ENCODE measurements at regions of chr6 and their contacts with region 1.

Region 1: GRCh38 chr6:137497721-137498463 is 3.7 kb upstream of the OLIG3 start:
- DNase-seq: peak; percentile 33
- ATAC-seq: peak; percentile 11
- H3K4me3 Mint-ChIP-seq: peak overlapping the region; percentile 38
- H3K27ac Mint-ChIP-seq: no peak overlapping the region
- H3K4me1 Mint-ChIP-seq: peaks cover 42% of the 10 kb centered on the region
- H3K27me3 Mint-ChIP-seq: peaks cover 69% of the 10 kb centered on the region

Region 2: DNA sequence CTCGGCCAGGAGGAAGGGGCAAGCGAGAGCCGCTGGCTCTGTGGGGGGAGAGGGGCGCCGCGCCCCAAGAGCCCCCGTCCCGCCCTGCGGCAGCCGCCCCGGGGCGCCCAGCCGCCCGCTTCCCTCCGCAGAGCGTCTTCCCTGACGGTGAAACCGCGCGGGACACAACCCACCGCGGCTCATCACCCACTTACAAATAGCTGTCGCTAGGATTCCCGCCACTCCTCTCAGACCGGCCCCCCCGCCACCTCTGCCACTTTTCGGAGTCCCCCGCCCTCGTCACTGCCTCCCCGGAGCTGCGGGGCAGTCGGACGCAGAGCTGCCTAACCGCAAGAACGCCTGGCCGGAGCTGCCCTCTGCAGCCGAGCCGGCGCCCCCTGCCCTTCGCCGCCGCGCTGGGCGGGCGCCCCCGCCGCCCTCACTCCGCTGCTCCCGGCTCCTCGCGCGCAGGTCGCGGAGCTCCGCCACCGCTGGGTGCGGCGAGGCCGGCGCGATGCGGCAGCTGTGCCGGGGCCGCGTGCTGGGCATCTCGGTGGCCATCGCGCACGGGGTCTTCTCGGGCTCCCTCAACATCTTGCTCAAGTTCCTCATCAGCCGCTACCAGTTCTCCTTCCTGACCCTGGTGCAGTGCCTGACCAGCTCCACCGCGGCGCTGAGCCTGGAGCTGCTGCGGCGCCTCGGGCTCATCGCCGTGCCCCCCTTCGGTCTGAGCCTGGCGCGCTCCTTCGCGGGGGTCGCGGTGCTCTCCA is 575.8 kb before region 1 on chr6 and contains the start of gene SLC35D3:
- CTCF ChIA-PET with region 1: no interaction called
- POLR2A ChIA-PET with region 1: no interaction called
- intact Hi-C with region 1: loop called in 1 of 2 experiments (anchors 5 kb)
- DNase-seq: peak; percentile 41
- ATAC-seq: peak; percentile 35
- H3K4me3 Mint-ChIP-seq: peak within 1 kb of the TSS; percentile 69
- H3K27ac Mint-ChIP-seq: no peak within 1 kb of the TSS
- H3K4me1 Mint-ChIP-seq: peaks cover 18% of the 10 kb centered on the region
- H3K27me3 Mint-ChIP-seq: peaks cover 51% of the 10 kb centered on the region
- total RNA-seq, gene SLC35D3: not detected

Region 3: DNA sequence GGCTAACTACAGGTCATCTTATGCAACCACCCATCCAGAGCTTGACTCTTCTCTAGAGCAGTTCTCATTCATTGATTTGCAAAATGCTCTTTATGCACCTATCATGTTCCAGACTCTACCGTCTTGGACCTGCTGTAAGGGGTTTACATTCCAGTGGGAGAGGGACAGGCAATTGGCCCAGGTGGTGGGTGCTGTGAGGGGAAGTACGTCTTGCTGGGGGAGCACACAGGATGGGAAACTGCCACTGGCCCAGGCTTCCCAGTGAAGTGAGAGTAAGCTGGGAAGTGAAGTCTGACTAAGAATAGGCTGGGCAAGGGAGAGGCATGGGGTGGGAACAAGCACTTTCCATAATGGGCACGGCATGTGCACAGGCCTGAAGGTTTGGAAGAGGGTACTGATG is 17.5 kb before region 1 on chr6:
- CTCF ChIA-PET with region 1: no interaction called
- POLR2A ChIA-PET with region 1: no interaction called
- intact Hi-C with region 1: no loop called
- DNase-seq: no peak
- ATAC-seq: no peak
- H3K4me3 Mint-ChIP-seq: no peak overlapping the region
- H3K27ac Mint-ChIP-seq: no peak overlapping the region
- H3K4me1 Mint-ChIP-seq: no peaks in the 10 kb centered on the region
- H3K27me3 Mint-ChIP-seq: peaks cover 34% of the 10 kb centered on the region

Region 4: DNA sequence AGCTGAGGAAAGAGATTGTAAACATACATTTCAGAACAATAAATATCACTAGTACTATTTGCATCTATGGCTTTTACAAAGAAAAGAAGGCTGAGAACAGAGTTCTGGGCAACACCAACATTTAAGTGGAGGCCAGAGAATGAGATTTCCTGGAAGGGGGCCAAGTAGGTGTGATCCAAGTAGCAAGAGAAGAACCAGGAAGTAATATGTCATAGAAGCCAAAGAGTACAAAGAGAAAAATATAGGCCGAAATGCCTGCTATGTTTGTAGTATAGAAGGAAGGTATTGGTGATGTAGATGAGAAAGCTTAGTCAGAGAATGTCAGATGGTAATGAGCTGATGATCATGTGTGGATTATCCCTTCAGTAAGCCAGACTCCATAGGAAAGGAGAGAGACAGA is 514.8 kb after region 1 on chr6:
- CTCF ChIA-PET with region 1: no interaction called
- POLR2A ChIA-PET with region 1: no interaction called
- intact Hi-C with region 1: no loop called
- DNase-seq: no peak
- ATAC-seq: no peak
- H3K4me3 Mint-ChIP-seq: no peak overlapping the region
- H3K27ac Mint-ChIP-seq: no peak overlapping the region
- H3K4me1 Mint-ChIP-seq: no peaks in the 10 kb centered on the region
- H3K27me3 Mint-ChIP-seq: no peaks in the 10 kb centered on the region